ENCODE measurements at regions of chr6 and their contacts with region 1.

Region 1: DNA sequence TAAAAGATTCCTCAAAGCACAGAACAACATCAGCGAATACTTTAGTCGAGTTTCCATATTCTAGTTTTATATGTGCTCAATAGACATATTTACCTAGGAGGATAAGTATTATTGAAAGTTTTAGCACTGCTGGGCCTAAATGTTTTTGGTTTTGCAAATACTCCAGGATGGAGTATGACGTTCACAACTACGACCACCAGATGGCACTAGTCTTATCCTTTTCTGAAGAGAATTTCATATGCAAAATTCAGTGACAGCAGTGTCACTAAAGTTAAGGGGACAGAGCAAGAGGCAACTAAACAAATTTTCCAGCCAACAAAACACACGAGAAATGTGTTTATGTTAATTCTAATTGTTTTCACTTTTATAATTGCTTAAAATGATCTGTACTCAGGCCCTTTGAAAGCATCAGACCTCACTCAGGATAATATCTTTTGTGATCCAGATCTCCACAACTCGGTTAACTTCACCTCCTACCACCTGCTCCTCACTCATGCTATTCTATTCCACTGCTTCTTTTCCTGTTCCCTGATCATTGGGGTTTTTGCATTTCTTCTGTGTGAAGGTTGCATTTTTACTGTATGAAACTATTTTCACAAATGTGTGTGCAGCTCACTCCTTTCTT is 220.8 kb downstream of the TRDN start:
- DNase-seq: peak; percentile 47

Region 2: DNA sequence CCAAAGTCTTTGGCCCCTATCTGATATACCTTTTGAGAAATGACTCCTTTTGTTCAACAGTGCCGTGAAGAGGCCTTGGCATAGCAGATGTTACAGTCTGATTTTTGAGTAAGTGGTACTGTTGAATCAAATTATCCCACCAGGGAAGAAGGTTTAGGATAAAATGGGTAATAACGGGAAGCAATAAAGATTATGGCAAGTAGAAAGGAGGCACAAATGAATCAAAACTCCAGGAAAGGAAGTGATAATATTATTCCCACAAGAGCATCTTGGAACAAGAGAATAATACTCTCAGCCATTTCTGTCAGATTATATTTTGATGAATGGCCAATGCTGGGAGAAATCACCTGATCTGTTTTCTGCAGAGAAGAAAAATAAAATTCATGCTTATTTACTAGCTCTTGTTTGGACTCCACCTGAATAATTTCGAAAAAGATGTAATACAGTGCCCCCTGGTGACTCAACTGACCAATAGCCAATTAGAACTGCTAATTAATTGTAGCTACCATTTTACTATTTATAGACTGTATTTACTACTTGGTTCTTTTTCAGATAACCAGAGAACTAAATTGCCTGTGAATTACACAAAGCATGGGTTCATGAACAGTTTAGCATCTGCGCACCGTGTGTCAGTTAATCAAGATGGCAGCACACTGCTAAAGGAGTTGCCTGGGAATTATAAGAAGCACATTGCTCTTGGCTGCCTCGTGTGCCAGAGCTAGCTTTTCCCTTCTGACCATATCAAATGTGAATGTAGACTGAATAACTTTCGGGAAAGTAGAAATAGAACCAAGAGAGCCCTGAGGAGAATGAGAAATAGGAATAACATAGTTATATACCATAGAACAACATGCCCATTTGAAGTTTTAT is 299.3 kb after region 1 on chr6:
- CTCF ChIA-PET with region 1: interaction called, 27 read pairs
- POLR2A ChIA-PET with region 1: no interaction called
- DNase-seq: peak; percentile 29

Measured in HEK293T (cell line).